SK-N-SH (cell line): ENCODE measurements at regions of chr5 and their contacts with region 1.

Region 1: DNA sequence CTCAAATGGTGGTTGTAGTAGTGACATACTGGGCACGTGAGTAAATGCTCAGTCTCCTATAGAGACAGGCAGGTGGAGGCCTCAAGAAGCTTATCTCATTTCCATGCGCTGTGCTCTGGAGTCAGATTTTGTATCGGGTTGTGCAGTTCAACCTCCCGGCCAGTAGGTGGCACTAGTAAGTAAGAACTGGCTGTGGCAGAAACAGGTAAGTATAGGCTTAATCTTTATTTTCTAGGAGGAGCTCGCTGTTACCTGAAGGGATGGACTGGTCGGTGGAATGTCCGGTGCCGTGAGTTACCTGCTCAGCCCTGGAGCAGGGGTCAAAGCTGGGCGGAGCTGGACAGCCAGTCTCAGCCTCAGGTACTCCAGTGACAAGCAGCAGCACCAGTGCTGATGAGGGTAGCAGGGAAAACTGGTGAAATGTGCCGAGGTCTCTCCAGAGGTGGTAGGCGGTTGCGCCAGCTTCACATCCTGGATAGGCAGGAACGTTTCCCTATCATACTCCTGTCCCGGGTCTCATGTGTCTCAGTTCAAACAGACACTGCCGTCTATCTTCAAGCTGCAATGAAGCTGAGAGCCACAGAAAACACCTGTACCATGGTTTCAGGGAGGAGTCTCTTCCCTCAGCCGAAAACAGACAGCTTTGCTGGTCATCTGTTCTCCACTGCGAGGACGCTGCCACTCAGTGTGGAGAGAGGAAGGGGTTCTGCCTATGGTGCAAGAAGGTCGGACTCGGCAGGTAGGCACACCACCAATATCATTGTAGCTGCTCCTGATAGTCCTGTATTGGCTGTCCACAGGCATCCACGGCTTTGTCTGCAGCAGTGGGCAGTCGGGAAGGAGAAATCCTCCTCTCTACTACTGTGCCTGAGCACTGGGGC is 880.3 kb upstream of the SEMA6A start:
- DNase-seq: peak; percentile 12
- H3K4me3 ChIP-seq: no peak overlapping the region
- H3K27ac ChIP-seq: no peak overlapping the region
- H3K4me1 ChIP-seq: no peaks in the 10 kb centered on the region
- H3K27me3 ChIP-seq: no peaks in the 10 kb centered on the region
- CTCF ChIP-seq: peak; percentile 73
- EP300 ChIP-seq: no peak
- RAD21 ChIP-seq: peak; percentile 68

Region 2: GRCh38 chr5:117435203-117435602 is 19.8 kb before region 1 on chr5:
- CTCF ChIA-PET with region 1: interaction called, 11 read pairs
- POLR2A ChIA-PET with region 1: no interaction called
- DNase-seq: no peak
- H3K4me3 ChIP-seq: no peak overlapping the region
- H3K27ac ChIP-seq: no peak overlapping the region
- H3K4me1 ChIP-seq: no peaks in the 10 kb centered on the region
- H3K27me3 ChIP-seq: no peaks in the 10 kb centered on the region
- CTCF ChIP-seq: no peak
- EP300 ChIP-seq: no peak
- RAD21 ChIP-seq: no peak